Endothelial cell of umbilical vein (primary cell): ENCODE measurements at regions of chr12 and their contacts with region 1.

Region 1: DNA sequence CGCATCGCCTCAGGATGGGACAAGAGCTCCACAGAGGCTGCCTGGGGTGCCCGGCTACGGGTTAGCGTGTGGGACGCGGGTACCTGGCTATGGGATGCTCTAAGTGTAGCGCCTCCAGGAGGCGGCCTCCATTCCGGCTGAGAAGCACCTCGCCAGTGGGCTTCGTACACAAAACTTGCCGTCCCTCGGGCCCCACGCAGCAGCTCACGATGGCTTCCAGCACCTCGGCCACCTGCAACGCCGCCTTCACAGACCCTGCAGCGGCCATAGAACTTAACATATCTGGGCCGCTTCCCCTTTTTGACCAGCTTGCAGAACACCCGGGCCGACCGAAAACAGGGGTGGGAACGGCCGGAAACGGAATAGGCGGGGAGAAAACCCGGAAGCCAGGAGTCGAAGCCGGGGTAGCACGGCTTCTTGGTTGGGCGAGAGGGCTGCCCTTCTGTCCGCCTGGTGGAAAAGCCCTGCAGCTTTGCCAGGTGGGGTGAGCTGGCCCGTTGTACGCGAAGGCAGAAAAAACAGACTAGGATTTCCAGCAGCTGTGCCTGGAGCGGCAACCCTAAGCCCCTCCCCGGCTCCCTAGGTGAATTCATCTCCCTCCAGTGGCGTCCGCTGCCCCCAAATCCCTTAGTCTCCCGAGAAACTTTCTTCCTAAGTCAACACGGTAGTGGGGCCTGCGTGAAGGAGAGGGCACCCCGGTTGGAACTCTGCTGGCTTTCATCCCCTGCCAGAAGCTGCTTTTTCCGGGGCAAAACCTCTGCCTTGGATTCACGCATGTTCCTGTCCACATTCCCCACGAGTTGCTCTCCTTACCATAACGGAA is at the start of gene BBS10:
- DNase-seq: peak; percentile 90
- H3K4me3 ChIP-seq: peak within 1 kb of the TSS; percentile 27 to 86 (median 82)
- H3K27ac ChIP-seq: peak within 1 kb of the TSS; percentile 44
- H3K4me1 ChIP-seq: peaks cover 18% of the 10 kb centered on the region
- H3K27me3 ChIP-seq: no peaks in the 10 kb centered on the region
- CTCF ChIP-seq: peak; percentile 24 to 66
- POLR2A ChIP-seq: peak; percentile 81
- total RNA-seq, gene BBS10: 7.5 and 7.8 TPM in 2 replicates

Region 2: DNA sequence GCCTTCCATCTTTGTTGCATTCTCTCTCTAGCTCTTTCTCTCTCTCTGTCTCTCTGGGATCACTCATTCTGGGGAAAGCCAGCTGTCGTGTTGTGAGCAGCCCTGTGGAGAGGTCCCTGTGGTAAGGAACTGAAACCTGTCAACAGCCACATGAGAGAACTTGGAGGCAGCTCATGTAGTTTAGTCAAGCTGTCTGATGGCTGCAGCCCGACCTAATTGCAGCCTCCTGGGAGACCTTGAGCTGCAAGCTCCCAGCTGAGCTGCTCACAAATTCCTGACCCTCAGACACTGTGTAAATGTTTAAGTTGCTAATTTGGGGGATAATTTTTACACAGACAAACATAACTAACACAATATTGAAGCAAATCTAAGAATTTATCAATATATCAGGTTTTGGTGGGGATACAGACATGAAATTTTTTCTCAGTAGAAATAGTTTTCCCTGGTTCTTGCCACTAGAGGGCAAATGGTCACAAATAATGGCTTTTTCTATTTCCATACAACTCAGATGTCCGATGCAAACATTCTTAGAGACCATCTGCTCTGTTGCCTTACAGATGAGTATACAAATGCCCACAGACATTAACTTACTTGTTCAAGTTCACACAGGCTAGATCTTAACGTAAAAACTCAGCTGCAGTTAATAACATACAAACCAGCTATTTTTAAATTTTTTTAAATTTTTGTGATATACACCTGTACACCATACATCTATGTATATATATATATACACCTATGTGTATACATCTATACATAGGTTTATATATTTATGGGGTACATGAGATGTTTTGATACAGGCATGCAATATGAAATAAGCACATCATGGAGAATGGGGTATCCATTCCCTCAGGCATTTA is 821.4 kb before region 1 on chr12:
- CTCF ChIA-PET with region 1: interaction called, 13 read pairs
- POLR2A ChIA-PET with region 1: no interaction called
- dilution Hi-C with region 1: no loop called
- intact Hi-C with region 1: loop called (anchors 1 kb)
- DNase-seq: peak; percentile 70
- H3K4me3 ChIP-seq: no peak overlapping the region
- H3K27ac ChIP-seq: no peak overlapping the region
- H3K4me1 ChIP-seq: no peaks in the 10 kb centered on the region
- H3K27me3 ChIP-seq: no peaks in the 10 kb centered on the region
- CTCF ChIP-seq: peak; percentile 38 to 49
- POLR2A ChIP-seq: no peak

Region 3: GRCh38 chr12:76083904-76084862 is 264.1 kb before region 1 on chr12 and contains the start of gene NAP1L1:
- CTCF ChIA-PET with region 1: interaction called, 30 read pairs
- POLR2A ChIA-PET with region 1: no interaction called
- dilution Hi-C with region 1: loop called (anchors 25 kb)
- intact Hi-C with region 1: loop called (anchors 1 kb)
- DNase-seq: peak; percentile 97
- H3K4me3 ChIP-seq: peak within 1 kb of the TSS; percentile 76 to 99 (median 93)
- H3K27ac ChIP-seq: peak within 1 kb of the TSS; percentile 92
- H3K4me1 ChIP-seq: peaks cover 38% of the 10 kb centered on the region
- H3K27me3 ChIP-seq: no peaks in the 10 kb centered on the region
- CTCF ChIP-seq: peak in 1 of 2 donors; percentile 7
- POLR2A ChIP-seq: peak; percentile 87
- total RNA-seq, gene NAP1L1: 649 and 665 TPM in 2 replicates

Region 4: DNA sequence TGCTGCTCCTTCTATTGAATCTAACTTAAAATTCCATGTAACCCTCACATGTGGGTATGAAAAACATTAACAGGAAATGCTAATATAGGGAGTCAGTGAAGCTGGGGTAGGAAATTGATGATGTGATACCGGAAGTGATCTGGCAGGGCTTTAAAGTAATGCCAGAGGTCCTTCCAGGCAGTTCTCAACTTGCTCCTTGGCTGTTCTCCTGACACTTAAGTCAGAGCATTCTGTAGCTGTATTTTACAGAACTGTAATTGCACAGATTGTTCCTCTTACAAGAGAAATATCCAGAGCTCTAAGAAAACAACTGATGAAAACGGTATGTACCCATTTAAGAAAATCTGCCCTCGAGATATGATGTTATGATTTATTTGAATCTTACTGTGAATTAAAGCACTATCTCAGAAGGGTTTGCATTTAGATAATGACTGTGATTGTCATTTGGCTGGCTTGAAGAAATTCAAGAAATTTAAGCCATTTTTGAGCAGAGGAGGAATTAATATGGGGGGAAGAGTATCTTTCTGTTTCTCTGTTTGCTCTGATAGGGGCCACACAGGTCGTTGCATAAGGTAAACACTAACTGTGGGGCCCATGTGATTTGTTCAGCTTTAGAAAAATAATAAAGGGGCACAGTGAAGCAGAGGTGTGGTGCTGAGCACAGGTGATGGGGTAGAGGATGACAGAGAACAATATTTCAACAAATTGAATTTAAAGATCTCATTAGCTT is 88.5 kb before region 1 on chr12:
- CTCF ChIA-PET with region 1: interaction called, 10 read pairs
- POLR2A ChIA-PET with region 1: interaction called, 3 read pairs
- dilution Hi-C with region 1: no loop called
- intact Hi-C with region 1: loop called (anchors 1 kb)
- DNase-seq: peak; percentile 93
- H3K4me3 ChIP-seq: peak overlapping the region; percentile 19 to 96 (median 95)
- H3K27ac ChIP-seq: peak overlapping the region; percentile 96
- H3K4me1 ChIP-seq: peaks cover 30% of the 10 kb centered on the region
- H3K27me3 ChIP-seq: no peaks in the 10 kb centered on the region
- CTCF ChIP-seq: no peak
- POLR2A ChIP-seq: peak; percentile 89

Region 5: DNA sequence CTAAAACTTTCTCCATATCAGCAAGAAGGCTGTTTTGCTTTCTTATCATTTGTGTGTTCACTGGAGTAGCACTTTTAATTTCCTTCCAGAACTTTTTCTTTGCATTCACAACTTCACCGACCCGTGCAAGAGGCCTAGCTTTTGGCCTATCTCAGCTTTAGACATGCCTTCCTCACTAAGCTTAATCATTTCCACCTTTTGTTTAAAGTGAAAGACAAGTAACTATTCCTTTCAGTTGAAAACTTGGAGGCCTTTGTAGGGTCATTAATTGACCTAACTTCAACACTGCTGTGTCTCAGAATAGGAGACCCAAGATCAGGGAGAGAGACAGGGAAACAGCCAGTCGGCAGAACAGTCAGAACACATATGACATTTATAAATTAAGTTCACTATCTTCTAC is 39.4 kb before region 1 on chr12:
- CTCF ChIA-PET with region 1: interaction called, 11 read pairs
- POLR2A ChIA-PET with region 1: no interaction called
- dilution Hi-C with region 1: no loop called
- intact Hi-C with region 1: no loop called
- DNase-seq: peak; percentile 82
- H3K4me3 ChIP-seq: no peak overlapping the region
- H3K27ac ChIP-seq: peak overlapping the region; percentile 52
- H3K4me1 ChIP-seq: peaks cover 16% of the 10 kb centered on the region
- H3K27me3 ChIP-seq: no peaks in the 10 kb centered on the region
- CTCF ChIP-seq: no peak
- POLR2A ChIP-seq: no peak

Region 6: DNA sequence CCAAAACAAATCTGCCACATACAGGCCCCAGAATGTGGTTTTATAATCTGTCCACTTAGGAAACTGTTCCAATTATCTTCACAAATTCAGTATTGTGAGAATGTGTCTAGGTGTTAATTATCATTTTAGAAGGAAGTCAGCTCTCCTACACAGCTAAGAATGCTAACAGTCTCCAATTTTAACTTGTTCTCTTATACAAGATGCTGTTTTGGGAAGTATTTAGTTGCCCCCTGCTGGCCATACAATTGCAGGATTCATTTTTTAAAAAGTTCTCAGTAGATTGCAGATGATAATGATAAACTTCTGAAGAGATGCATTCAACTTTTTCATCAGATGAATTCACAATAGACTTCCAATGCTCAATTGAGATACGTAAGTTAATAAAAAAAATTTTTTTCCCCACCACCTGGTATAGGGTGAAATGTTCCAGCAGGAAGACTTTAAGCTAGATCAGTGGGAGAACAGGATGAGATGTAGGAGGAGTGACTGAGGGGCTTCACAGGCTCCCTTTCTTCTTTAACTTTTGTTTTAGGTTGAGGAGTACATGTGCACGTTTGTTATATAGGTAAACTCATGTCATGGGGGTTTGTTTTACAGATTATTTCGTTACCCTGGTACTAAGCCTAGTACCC is 238.6 kb after region 1 on chr12:
- CTCF ChIA-PET with region 1: interaction called, 28 read pairs
- POLR2A ChIA-PET with region 1: no interaction called
- dilution Hi-C with region 1: no loop called
- intact Hi-C with region 1: loop called (anchors 1 kb)
- DNase-seq: peak; percentile 49
- H3K4me3 ChIP-seq: no peak overlapping the region
- H3K27ac ChIP-seq: no peak overlapping the region
- H3K4me1 ChIP-seq: peaks cover 3% of the 10 kb centered on the region
- H3K27me3 ChIP-seq: no peaks in the 10 kb centered on the region
- CTCF ChIP-seq: peak; percentile 21 to 47
- POLR2A ChIP-seq: no peak